Calu3 (cell line): ENCODE measurements at regions of chr12 and their contacts with region 1.

Region 1: DNA sequence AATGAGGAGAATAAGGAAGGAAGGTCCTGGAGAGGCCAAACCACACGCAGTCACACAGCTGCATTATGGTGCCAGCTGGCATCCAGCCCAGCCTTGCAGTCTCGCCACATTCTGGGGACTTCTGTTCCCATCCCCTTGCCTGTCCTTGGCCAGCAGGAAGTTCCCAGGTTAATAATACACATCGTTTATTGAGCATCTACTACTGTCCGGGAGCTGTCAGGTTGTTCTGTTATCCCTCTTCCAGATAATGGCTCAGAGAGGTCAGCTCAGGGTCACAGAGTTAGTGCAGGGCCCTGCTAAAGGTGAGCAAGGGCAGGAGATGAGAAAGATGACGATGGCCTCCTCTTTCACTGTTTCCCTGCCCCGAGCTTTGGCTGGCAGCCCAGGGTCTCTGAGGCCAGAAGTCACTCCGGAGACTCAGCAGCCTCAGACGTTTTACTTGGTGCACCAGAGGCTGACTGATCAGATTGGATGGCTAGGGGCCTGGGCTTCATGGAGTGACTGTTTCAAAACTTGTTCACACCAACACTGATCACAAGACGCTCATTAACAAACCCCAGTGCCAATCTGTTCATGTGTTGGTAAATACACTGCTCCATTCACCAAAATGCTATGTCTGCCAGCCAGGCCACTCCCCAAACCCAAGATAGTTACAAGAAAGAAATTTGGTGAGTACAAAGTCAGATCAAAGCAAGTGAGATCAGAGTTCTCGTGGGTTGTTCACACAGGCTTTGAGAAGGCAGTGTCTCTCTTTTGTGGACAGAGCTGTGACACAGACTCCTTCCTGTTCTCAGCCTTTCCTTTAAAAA is 79.2 kb downstream of the B4GALNT3 start:
- DNase-seq: peak; percentile 90
- H3K4me3 Mint-ChIP-seq: no peak overlapping the region
- H3K27ac Mint-ChIP-seq: peak overlapping the region; percentile 95
- H3K4me1 Mint-ChIP-seq: peaks cover 36% of the 10 kb centered on the region
- H3K27me3 Mint-ChIP-seq: peaks cover 2% of the 10 kb centered on the region
- CTCF ChIP-seq: no peak

Region 2: GRCh38 chr12:459430-460258 is 79.3 kb before region 1 on chr12 and contains the start of gene B4GALNT3:
- CTCF ChIA-PET with region 1: interaction called, 3 read pairs
- intact Hi-C with region 1: loop called (anchors 2 kb)
- DNase-seq: peak; percentile 61
- H3K4me3 Mint-ChIP-seq: peak within 1 kb of the TSS; percentile 67
- H3K27ac Mint-ChIP-seq: peak within 1 kb of the TSS; percentile 57
- H3K4me1 Mint-ChIP-seq: peaks cover 34% of the 10 kb centered on the region
- H3K27me3 Mint-ChIP-seq: peaks cover 70% of the 10 kb centered on the region
- CTCF ChIP-seq: no peak
- total RNA-seq, gene B4GALNT3: 15.9 and 19.3 TPM in 2 replicates

Region 3: GRCh38 chr12:510071-510825 is 28.7 kb before region 1 on chr12:
- CTCF ChIA-PET with region 1: interaction called, 37 read pairs
- intact Hi-C with region 1: loop called (anchors 2 kb)
- DNase-seq: peak; percentile 77
- H3K4me3 Mint-ChIP-seq: peak overlapping the region; percentile 51
- H3K27ac Mint-ChIP-seq: peak overlapping the region; percentile 73
- H3K4me1 Mint-ChIP-seq: peaks cover 48% of the 10 kb centered on the region
- H3K27me3 Mint-ChIP-seq: no peaks in the 10 kb centered on the region
- CTCF ChIP-seq: no peak